Activated T-helper 1 cell treated with anti-CD3 and anti-CD28 coated beads, Interleukin-12 subunit alpha, Interleukin-12 subunit beta, Interleukin-2, Interleukin-4 antibody, amounts not matched to agents 30 ng/mL and 10 ng/mL and 1 ng/mL, durations not matched to agents 14 hours and 24 hours and 36 hours (primary cell): ENCODE measurements at regions of chrX and their contacts with region 1.

Region 1: DNA sequence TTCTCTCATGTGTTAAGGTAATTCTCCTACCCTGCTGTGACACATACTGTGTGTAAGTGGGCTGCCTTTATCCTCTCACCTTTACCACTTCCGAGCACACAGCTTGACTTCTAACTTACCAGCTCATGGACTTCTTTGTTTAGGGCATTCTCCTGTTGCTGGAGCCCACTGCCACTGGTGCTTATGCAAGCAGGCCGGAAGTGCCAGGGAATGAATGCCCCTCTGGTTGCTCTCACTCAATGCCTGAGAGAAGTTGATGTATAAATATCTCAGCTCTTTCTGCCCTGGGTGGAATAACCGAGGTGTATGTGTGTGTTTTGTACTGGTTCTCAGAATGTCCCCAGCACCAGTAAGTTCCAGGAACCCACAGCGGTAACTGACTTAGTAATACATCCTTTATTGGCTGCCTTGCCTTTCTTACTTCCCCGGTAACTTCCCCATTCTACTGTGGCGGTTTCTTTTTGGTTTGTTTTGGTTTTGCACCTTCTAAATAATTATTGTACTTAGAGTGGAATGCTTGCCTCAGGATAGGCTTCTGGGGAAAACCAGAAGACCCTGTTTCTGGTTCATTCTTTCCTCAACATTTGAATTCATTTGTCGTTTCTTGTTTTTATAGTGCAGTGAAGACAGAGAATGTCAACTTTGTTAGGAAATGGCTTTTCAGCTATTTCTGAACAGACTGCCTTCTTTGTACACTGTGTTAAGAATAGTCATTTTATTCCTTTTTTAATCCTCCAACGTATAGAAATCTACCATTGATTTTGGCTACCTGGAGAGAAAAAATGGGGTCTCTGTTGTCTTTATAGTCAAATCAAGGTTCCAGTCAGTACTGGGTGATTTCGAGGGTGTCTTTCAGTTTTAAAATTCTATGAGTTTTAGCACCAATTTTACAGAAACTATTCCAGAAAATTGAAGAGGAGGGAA is 45.4 kb downstream of the CXorf58 start:
- DNase-seq: peak; percentile 45
- H3K4me3 Mint-ChIP-seq: peak overlapping the region; percentile 82
- H3K27ac Mint-ChIP-seq: peak overlapping the region; percentile 95
- H3K4me1 Mint-ChIP-seq: peaks cover 28% of the 10 kb centered on the region
- H3K27me3 Mint-ChIP-seq: no peaks in the 10 kb centered on the region

Region 2: DNA sequence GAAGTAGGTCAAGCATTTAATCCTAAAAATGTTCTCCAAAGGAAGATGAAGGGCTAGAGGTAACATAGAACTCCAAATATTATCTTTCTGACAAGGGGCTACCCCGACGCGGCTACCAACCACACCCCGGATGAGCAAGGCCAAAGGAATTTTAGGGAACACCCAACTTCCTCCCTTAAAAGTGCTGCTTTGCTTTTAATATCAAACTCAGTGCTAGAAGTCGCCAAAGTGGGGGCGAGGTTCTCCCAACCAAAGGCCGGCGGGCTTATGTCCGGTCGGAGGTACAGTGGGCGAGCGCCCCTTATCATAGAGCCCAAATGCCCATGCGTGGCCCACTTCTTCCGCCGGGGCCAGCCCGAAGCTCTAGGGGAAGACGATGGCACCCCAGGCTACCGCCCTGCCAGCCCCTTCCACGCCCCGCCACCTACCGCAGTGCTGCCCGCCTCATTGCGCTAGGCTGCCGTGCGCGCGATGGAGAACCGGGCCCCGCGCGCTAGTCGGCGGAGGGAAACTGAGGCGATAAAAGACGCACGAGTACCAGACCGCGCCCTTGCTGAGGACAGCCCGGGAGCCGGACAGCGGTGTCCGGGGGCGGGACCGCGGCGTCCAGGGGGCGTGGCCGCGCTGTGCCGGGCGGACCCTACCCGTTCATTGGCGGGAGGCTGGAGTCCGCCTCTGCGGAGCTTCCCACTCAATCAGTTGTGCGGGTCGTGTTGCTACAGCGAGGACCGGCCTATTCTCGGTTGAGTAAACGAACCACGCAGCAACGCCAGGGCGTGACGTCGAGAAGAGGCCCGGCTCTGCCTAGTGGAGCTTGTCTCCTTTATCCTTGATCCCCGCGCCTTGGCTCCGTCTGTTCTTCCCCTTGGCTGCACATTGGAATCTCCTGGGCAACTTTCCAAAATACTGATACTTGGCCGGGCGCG is 210.3 kb before region 1 on chrX and contains the start of gene ACOT9:
- intact Hi-C with region 1: loop called (anchors 5 kb)
- DNase-seq: peak; percentile 77
- H3K4me3 Mint-ChIP-seq: peak within 1 kb of the TSS; percentile 93
- H3K27ac Mint-ChIP-seq: peak within 1 kb of the TSS; percentile 92
- H3K4me1 Mint-ChIP-seq: peaks cover 29% of the 10 kb centered on the region
- H3K27me3 Mint-ChIP-seq: no peaks in the 10 kb centered on the region
- total RNA-seq, gene ACOT9: 58.3 and 60.3 TPM in 2 replicates

Region 3: GRCh38 chrX:23989689-23990088 is 36.4 kb after region 1 on chrX:
- intact Hi-C with region 1: loop called (anchors 5 kb)
- DNase-seq: no peak
- H3K4me3 Mint-ChIP-seq: no peak overlapping the region
- H3K27ac Mint-ChIP-seq: no peak overlapping the region
- H3K4me1 Mint-ChIP-seq: peaks cover 21% of the 10 kb centered on the region
- H3K27me3 Mint-ChIP-seq: no peaks in the 10 kb centered on the region

Region 4: GRCh38 chrX:24014388-24015018 is 61.3 kb after region 1 on chrX:
- intact Hi-C with region 1: loop called (anchors 1 kb)
- DNase-seq: peak; percentile 21
- H3K4me3 Mint-ChIP-seq: peak overlapping the region; percentile 64
- H3K27ac Mint-ChIP-seq: peak overlapping the region; percentile 89
- H3K4me1 Mint-ChIP-seq: peaks cover 36% of the 10 kb centered on the region
- H3K27me3 Mint-ChIP-seq: no peaks in the 10 kb centered on the region

Region 5: GRCh38 chrX:24024819-24025740 is 71.8 kb after region 1 on chrX:
- intact Hi-C with region 1: loop called (anchors 1 kb)
- DNase-seq: peak; percentile 72
- H3K4me3 Mint-ChIP-seq: peak overlapping the region; percentile 92
- H3K27ac Mint-ChIP-seq: peak overlapping the region; percentile 88
- H3K4me1 Mint-ChIP-seq: peaks cover 25% of the 10 kb centered on the region
- H3K27me3 Mint-ChIP-seq: no peaks in the 10 kb centered on the region